PC-9 (cell line): ENCODE measurements at regions of chr17 and their contacts with region 1.

Region 1: GRCh38 chr17:78289802-78290363 is 58.5 kb downstream of the TMEM235 start:
- DNase-seq: peak; percentile 59 to 68
- H3K4me3 ChIP-seq: no peak overlapping the region
- H3K27ac ChIP-seq: no peak overlapping the region
- H3K4me1 ChIP-seq: peaks cover 9% of the 10 kb centered on the region
- H3K27me3 ChIP-seq: no peaks in the 10 kb centered on the region
- CTCF ChIP-seq: peak; percentile 79

Region 2: GRCh38 chr17:76726231-76726775 is 1563.6 kb before region 1 on chr17 and contains the start of gene JMJD6:
- CTCF ChIA-PET with region 1: no interaction called
- POLR2A ChIA-PET with region 1: interaction called, 26 read pairs
- intact Hi-C with region 1: no loop called
- DNase-seq: peak; percentile 79 to 95
- H3K4me3 ChIP-seq: peak within 1 kb of the TSS; percentile 78
- H3K27ac ChIP-seq: peak within 1 kb of the TSS; percentile 81
- H3K4me1 ChIP-seq: peaks cover 12% of the 10 kb centered on the region
- H3K27me3 ChIP-seq: no peaks in the 10 kb centered on the region
- CTCF ChIP-seq: no peak
- total RNA-seq, gene JMJD6: 19.4 and 25.2 TPM in 2 replicates

Region 3: DNA sequence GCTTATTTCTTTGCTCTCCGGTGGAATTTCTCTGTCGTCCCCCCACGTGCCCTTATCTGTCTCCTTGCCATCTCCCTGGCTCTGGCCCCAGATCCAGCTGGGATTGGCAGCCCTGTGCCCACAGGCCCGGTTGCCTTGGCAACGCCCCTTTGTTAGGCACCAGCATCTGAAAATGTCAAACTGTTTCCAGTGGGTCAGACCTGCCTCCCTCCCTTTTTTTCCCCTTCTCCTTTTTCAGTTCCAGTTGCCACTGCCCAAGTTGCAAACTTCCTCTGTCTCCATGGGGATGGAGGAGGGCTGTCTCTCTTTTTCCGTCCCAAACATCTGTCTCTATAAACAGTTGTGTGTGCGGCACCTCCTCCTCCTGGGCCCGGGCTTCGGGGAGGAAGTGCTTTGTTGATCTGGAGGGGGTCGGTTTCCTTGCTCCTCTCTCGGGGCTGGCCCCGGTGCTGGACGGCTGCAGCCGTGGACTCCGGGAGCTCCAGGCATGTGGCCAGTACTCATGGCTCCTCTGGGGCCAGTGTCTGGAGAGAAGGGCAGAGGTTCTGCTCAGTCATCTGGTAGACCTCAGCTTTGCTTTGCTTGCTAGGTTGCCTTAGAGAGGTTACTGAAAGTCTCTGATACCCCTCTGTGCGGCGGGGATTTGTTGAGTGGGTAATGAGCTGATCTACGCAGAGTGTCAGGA is 34.6 kb after region 1 on chr17:
- CTCF ChIA-PET with region 1: no interaction called
- POLR2A ChIA-PET with region 1: interaction called, 19 read pairs
- intact Hi-C with region 1: no loop called
- DNase-seq: no peak
- H3K4me3 ChIP-seq: no peak overlapping the region
- H3K27ac ChIP-seq: no peak overlapping the region
- H3K4me1 ChIP-seq: peaks cover 16% of the 10 kb centered on the region
- H3K27me3 ChIP-seq: no peaks in the 10 kb centered on the region
- CTCF ChIP-seq: no peak

Region 4: DNA sequence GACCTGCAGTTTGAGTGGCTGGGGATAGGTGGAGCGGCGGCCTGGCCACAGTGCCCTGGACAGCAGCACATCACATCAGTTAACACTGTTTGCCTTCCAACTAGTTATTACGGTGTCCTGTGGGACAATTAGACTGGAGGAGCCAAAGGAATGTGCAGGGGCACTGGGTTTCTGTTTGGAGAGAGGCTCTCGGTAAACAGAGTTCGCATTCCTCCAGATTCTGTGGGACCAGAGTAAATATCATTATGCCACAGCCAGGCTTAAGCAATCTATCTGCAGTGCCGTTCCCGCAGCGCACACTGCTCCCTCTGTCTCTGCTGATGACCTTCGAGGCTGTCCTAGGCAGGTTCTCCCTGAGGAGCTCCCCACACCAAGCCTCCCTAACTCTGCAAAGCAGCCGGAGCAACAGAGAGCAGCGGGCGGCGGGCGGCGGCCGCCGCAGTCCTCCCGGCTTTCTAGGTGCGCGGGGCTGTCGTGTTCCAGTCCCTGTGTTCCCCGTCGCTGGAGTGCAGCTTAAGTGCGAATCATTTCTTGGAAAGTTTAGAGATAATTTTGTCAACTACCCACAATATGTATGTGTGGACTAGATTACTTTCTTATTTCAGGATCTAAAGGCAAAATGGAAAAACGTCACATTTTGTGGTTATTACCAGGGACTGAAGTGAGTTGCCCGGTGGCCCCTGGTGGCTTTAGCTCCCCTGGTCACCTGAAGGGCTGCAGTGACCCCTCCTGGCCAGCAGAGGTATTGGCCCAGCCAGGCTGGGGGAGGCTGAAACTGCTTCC is 131.8 kb after region 1 on chr17:
- CTCF ChIA-PET with region 1: interaction called, 3 read pairs
- POLR2A ChIA-PET with region 1: no interaction called
- intact Hi-C with region 1: loop called (anchors 5 kb)
- DNase-seq: peak; percentile 47 to 77
- H3K4me3 ChIP-seq: no peak overlapping the region
- H3K27ac ChIP-seq: no peak overlapping the region
- H3K4me1 ChIP-seq: no peaks in the 10 kb centered on the region
- H3K27me3 ChIP-seq: no peaks in the 10 kb centered on the region
- CTCF ChIP-seq: peak; percentile 87

Region 5: GRCh38 chr17:78697554-78698343 is 407.9 kb after region 1 on chr17:
- CTCF ChIA-PET with region 1: no interaction called
- POLR2A ChIA-PET with region 1: no interaction called
- intact Hi-C with region 1: no loop called
- DNase-seq: no peak
- H3K4me3 ChIP-seq: no peak overlapping the region
- H3K27ac ChIP-seq: no peak overlapping the region
- H3K4me1 ChIP-seq: no peaks in the 10 kb centered on the region
- H3K27me3 ChIP-seq: no peaks in the 10 kb centered on the region
- CTCF ChIP-seq: no peak